Gastrocnemius medialis (tissue), 4 donors: ENCODE measurements at regions of chr14 and their contacts with region 1.

Region 1: GRCh38 chr14:77760381-77761246 is at the start of gene SNW1:
- DNase-seq: peak; percentile 89 to 94
- ATAC-seq: peak; percentile 99
- H3K4me3 ChIP-seq: peak within 1 kb of the TSS; percentile 81 to 100 (median 94)
- H3K27ac ChIP-seq: peak within 1 kb of the TSS; percentile 92 to 97 (median 94)
- H3K4me1 ChIP-seq: peaks cover 28 to 32% of the 10 kb centered on the region in 2 donors
- H3K27me3 ChIP-seq: no peaks in the 10 kb centered on the region
- CTCF ChIP-seq: peak in 1 of 5 experiments; percentile 14
- POLR2A ChIP-seq: peak; percentile 82 to 86
- total RNA-seq, gene SNW1: 47.1 to 59.7 (median 54.4) TPM

Region 2: DNA sequence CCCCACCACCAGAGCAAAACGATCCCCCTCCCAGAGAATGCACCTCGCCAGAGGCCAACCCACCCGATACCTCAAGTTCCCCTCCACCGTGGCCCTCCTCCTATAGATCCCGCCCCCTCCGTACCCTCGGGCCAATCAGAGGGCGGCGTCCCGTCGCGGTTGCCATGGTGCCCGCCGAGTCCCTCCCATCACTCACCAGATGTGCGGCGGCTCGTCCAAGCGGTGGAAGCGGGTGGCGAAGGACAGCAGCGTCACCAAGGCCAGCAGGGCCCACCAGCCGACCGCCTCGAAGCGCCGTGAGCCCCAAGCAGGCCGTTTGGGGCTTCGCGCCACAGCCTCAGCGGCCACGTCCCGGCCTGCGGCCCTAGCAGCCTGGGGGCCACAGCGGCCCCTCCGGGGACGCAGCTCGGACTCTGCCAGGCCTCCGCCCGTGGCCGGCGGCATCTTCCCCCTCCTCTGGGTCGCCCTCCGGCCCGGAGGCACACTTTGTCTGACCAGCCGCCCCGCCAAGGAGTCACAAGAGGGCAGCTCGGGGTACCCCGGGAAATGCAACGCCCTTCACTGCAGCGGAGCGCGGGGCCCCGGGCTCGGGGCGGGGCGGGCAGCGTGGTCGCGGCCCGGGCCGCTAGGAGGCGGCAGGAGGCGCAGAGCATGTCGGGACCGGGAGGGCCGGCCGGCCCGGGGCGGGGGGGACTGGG is 440.2 kb before region 1 on chr14 and contains the start of gene POMT2:
- in situ Hi-C with region 1: no loop called
- intact Hi-C with region 1: loop called (anchors 5 kb)
- DNase-seq: peak; percentile 94
- ATAC-seq: peak; percentile 56 to 63
- H3K4me3 ChIP-seq: peak within 1 kb of the TSS; percentile 79 to 100 (median 82)
- H3K27ac ChIP-seq: peak within 1 kb of the TSS; percentile 95 to 99 (median 97)
- H3K4me1 ChIP-seq: peaks cover 47 to 49% of the 10 kb centered on the region in 2 donors
- H3K27me3 ChIP-seq: no peaks in the 10 kb centered on the region
- CTCF ChIP-seq: peak in 4 of 5 experiments; percentile 50 to 82 (median 70)
- POLR2A ChIP-seq: peak; percentile 89 to 90
- total RNA-seq, gene POMT2: 27.0 to 33.2 (median 28.9) TPM

Region 3: DNA sequence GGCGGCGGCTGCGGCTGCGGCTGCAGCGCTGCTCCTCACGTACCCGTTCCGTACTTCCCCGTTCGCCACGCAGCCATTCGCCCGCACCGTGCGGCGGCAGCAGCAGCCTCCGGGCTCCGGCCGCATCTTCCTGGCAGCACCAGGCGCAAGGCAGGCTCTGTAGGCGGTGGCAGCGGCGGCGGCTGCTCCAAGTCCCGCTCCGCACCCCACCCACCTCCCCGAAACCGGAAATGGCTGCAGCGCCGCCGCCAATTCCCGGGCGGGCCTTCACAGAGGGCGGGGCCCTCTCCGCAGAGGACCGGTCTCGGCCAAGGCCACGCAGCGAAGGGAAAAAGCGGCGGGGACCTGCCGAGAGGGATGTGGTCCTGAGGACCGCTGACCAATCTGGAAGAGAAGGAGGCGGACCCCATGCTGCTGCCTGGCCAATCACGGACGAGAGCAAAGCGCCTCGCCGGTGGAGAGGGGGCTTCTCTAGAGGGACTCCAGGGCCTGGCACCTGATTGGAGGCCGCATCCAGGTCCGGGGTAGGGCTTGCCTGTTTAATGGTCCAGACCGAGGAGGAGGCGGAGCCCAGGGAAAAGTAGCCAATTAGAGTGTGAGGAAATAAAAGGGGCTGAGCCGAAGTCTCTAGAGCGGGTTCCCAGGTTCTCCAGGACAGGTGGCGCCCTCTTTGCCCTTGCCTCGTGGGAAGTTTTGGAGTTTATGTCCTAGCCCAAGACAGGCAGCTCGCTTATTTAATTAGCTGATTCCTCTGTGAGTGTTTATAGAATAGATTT is 144.0 kb before region 1 on chr14 and contains the start of gene SPTLC2:
- in situ Hi-C with region 1: no loop called
- intact Hi-C with region 1: loop called (anchors 2 kb)
- DNase-seq: peak; percentile 98 to 99
- ATAC-seq: peak; percentile 96 to 97
- H3K4me3 ChIP-seq: peak within 1 kb of the TSS; percentile 71 to 84 (median 80)
- H3K27ac ChIP-seq: peak within 1 kb of the TSS; percentile 67 to 76 (median 74)
- H3K4me1 ChIP-seq: peaks cover 12 to 18% of the 10 kb centered on the region in 2 donors
- H3K27me3 ChIP-seq: no peaks in the 10 kb centered on the region
- CTCF ChIP-seq: peak in 1 of 5 experiments; percentile 2
- POLR2A ChIP-seq: peak; percentile 55 to 73
- total RNA-seq, gene SPTLC2: 6.5 to 10.4 (median 7.0) TPM

Region 4: DNA sequence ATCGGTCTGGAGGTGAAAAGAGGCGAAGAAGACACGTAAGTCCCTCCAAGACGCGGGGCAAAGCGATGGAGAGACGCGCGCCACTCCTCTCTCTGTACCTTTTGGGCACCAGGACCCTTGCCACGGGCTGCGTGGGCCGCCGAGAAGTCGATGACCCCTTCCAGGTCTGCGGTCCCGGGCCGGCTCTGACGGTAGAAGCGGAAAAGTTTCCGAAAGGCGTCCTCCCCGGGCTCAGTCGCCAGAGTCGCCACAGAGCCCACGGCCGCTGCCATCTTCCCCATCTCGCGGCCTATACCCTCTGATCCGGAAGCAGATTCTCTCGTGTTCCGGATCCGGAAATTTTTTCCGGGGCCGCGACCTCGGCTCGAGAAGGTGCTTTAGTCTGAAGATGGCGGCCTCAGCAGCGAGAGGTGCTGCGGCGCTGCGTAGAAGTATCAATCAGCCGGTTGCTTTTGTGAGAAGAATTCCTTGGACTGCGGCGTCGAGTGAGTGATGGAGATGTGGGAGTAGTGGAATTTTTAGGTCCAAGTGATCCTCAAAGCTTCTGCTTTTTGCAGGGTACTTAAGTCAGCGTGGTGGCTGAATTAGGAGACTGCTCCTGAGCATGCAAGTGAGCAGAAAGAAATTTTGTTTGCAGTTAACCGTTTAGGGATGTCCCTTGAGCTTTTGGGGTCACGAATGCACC is 52.7 kb before region 1 on chr14 and contains the starts of genes ALKBH1 and SLIRP:
- in situ Hi-C with region 1: no loop called
- intact Hi-C with region 1: loop called (anchors 1 kb)
- DNase-seq: peak; percentile 81
- ATAC-seq: peak; percentile 98
- H3K4me3 ChIP-seq: peak within 1 kb of the TSS; percentile 81 to 97 (median 92)
- H3K27ac ChIP-seq: peak within 1 kb of the TSS; percentile 74 to 87 (median 80)
- H3K4me1 ChIP-seq: peaks cover 31 to 34% of the 10 kb centered on the region in 2 donors
- H3K27me3 ChIP-seq: no peaks in the 10 kb centered on the region
- CTCF ChIP-seq: peak in 1 of 5 experiments; percentile 6
- POLR2A ChIP-seq: peak; percentile 65 to 76
- total RNA-seq, gene ALKBH1: 12.2 to 16.2 (median 13.6) TPM
- total RNA-seq, gene SLIRP: 293 to 550 (median 332) TPM

Region 5: DNA sequence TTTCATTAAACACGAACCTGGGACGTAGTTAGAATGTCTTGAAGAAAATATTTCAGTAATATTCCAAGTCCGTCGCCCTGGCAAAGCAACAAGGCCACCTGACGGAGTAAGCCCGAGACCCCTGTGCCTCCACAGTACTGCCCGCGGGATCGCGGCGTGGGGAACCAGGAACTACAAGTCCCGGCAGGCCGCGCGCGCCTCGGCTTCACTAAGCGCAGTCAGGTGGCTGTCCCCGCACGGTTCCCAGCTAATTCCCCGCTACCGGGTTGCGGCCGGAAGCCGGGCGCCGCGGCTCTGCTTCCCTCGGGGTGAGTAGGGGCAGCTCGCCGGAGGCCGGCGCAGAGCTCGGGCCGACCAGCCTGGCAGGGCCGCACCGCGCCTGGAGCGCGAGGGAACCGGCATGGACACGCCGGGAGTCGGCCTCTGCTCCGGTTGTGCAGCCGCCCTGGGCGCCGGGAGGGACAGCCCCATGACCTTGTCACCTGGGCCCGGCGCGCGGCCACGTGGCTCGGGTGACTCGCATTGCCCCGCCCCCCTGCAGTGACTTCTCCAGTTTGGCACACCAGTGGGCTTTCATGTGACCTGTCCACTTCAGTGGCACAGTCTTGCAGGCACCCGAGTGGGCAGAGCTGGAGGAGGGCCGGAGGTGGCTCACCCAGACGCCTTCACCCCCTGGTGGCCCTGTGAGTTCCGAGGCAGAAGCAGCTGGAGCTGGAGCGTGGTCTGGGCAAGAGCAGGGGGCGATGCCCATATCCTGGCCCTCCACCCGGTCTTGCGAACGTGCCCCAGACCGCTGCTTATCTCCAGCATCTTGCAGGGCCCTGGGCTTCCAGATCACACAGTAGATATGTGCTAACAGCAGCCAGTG is 39.5 kb after region 1 on chr14 and contains the start of gene ADCK1:
- in situ Hi-C with region 1: no loop called
- intact Hi-C with region 1: loop called (anchors 1 kb)
- DNase-seq: peak; percentile 86 to 97
- ATAC-seq: peak; percentile 93 to 96
- H3K4me3 ChIP-seq: peak within 1 kb of the TSS; percentile 66 to 94 (median 89)
- H3K27ac ChIP-seq: peak within 1 kb of the TSS; percentile 87 to 98 (median 96)
- H3K4me1 ChIP-seq: peaks cover 12 to 14% of the 10 kb centered on the region in 2 donors
- H3K27me3 ChIP-seq: no peaks in the 10 kb centered on the region
- CTCF ChIP-seq: peak; percentile 32 to 52 (median 41)
- POLR2A ChIP-seq: peak; percentile 75 to 83
- total RNA-seq, gene ADCK1: 3.5 to 11.0 (median 5.5) TPM

Region 6: DNA sequence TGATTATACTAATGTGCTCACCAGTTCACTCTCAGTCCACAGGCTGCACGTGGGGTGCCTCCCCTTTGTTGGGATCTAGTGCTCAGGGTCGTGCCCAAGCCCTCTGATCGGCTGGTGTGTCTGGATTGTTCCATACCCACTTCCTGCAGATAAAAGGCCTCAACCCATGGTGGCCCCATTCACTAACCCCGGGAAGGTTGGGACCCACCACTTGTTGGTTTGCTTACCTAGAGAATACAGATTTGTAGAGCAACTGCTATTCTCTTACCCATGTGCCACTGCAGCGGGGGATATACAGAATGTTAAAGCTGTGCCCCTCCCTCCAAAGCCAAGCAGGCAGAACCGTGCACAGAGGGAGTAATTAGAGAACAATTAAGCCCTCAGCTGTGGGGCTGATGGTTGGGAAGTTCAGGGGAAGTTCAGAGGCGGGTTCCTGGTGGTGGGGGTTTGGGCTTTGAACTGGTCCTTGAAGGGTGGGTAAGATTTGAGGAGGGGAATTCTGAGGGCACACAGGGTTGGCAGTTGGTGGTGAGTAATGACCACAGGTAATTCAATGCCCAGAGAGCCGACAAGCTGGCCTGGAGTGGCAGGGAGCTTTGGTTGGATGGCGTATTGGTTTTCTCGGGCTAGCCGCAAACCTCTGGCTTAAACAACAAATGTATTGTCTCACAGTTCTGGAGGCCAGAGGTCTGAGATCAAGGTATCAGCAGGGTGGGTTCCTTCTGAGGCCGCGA is 108.1 kb after region 1 on chr14:
- in situ Hi-C with region 1: no loop called
- intact Hi-C with region 1: no loop called
- DNase-seq: no peak
- ATAC-seq: no peak
- H3K4me3 ChIP-seq: no peak overlapping the region
- H3K27ac ChIP-seq: no peak overlapping the region
- H3K4me1 ChIP-seq: no peaks in the 10 kb centered on the region
- H3K27me3 ChIP-seq: no peaks in the 10 kb centered on the region
- CTCF ChIP-seq: no peak
- POLR2A ChIP-seq: no peak

Region 7: GRCh38 chr14:79204591-79204990 is 1444.0 kb after region 1 on chr14:
- in situ Hi-C with region 1: no loop called
- intact Hi-C with region 1: no loop called
- DNase-seq: no peak
- ATAC-seq: no peak
- H3K4me3 ChIP-seq: no peak overlapping the region
- H3K27ac ChIP-seq: no peak overlapping the region
- H3K4me1 ChIP-seq: no peaks in the 10 kb centered on the region
- H3K27me3 ChIP-seq: no peaks in the 10 kb centered on the region
- CTCF ChIP-seq: no peak
- POLR2A ChIP-seq: no peak